ENCODE measurements at regions of chr3 and their contacts with region 1.

Region 1: GRCh38 chr3:122564155-122564912 is at the starts of genes DTX3L and PARP9:
- DNase-seq: peak; percentile 44 to 89 (median 70)

Region 2: DNA sequence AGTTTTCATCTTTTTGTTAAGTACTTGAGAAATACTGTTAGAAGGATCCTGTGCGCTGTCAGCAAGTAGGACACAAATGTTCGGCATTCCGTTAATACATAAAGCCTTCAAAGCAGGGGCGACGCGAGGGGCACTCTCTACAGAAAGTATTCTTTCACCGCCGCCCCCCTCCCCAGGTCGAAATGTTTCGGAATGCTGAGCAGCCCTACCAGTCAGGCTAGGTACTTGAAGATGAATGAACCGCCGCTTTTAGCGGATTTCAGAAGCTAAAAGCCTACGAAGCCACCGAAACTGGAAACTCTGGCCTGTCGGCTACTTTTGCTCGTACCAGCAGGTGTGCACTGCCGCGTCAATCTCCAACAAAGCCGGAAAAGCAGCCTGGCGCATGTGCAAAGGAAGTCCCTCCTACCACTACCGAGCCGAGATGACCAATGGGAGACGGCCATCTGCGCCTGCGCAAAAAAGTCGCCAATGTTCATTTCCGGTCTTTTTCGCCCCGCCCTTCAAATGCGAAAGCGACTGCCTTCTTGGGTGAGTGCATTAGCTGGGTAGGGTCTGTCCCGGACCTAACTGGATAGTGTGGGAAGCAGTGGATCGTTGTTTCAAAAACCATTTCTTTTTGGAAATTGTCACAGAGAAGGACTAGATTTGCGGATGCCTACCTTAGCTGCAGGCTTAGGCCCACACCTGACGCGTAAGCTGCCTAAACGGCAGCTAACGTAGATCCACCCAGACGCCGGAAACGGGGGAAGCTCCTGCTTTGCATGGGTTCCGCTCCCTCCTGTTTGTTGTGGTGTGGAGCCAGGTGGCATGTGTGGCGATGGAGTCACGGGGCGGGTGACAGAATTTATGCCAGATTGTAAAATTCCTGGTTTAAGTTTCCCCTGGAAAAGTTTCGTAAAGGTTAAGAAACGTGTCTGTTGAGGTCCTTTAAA is 148.3 kb before region 1 on chr3 and contains the start of gene WDR5B:
- intact Hi-C with region 1: no loop called
- DNase-seq: peak; percentile 93 to 99 (median 97)

Region 3: GRCh38 chr3:122514123-122515019 is 50.0 kb before region 1 on chr3 and contains the start of gene KPNA1:
- intact Hi-C with region 1: loop called (anchors 10 kb)
- DNase-seq: peak; percentile 70 to 95 (median 90)

Region 4: GRCh38 chr3:122679085-122679881 is 114.9 kb after region 1 on chr3:
- intact Hi-C with region 1: loop called (anchors 1 kb)
- DNase-seq: peak; percentile 66 to 92 (median 79)

Measured in head of caudate nucleus (tissue), 42 donors.